CD4-positive, alpha-beta T cell (primary cell): ENCODE measurements at regions of chr21 and their contacts with region 1.

Region 1: DNA sequence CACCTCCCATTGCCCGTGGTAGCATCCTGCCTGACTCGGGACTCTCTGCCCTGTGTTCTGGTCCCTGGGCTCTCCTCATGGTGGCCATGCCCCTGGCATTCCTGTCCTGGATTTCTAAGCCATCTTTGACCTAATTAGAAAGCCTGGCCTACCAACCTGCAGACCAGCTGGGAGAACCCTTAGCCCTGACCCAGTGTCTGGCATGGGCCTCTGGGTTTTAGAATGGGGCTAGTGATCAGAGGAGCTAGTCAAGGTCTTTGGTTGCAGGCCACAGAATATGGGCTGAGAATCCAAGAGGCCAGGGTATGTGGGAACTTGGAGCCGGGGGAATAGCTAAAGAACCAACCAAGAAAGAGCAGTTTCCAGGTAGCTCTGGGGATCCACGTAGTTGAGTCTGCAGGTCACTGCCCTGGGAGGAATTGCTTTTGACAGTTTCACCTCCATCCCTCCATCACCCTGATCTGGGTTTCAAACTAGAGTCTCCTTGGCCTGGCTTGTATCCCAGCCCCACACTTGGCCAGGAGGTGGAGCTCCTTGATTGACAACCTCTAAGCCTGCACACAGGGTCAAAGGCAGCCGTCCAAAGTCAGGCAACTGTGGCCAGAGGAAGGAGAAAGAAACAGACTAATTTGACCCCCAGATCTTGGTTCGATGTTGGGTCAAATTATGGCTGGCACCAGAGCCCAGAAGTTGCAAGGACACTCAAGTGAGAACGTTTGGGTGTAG is 54.7 kb upstream of the ABCG1 start:
- DNase-seq: peak; percentile 22 to 78 (median 50)
- ATAC-seq: peak; percentile 34
- H3K4me3 ChIP-seq: no peak overlapping the region
- H3K4me3 Mint-ChIP-seq: no peak overlapping the region
- H3K27ac ChIP-seq: no peak overlapping the region
- H3K27ac Mint-ChIP-seq: peak overlapping the region; percentile 56
- H3K4me1 ChIP-seq: peaks cover 31% of the 10 kb centered on the region
- H3K4me1 Mint-ChIP-seq: peaks cover 56% of the 10 kb centered on the region
- H3K27me3 ChIP-seq: no peaks in the 10 kb centered on the region
- H3K27me3 Mint-ChIP-seq: no peaks in the 10 kb centered on the region
- CTCF ChIP-seq: peak; percentile 62

Region 2: DNA sequence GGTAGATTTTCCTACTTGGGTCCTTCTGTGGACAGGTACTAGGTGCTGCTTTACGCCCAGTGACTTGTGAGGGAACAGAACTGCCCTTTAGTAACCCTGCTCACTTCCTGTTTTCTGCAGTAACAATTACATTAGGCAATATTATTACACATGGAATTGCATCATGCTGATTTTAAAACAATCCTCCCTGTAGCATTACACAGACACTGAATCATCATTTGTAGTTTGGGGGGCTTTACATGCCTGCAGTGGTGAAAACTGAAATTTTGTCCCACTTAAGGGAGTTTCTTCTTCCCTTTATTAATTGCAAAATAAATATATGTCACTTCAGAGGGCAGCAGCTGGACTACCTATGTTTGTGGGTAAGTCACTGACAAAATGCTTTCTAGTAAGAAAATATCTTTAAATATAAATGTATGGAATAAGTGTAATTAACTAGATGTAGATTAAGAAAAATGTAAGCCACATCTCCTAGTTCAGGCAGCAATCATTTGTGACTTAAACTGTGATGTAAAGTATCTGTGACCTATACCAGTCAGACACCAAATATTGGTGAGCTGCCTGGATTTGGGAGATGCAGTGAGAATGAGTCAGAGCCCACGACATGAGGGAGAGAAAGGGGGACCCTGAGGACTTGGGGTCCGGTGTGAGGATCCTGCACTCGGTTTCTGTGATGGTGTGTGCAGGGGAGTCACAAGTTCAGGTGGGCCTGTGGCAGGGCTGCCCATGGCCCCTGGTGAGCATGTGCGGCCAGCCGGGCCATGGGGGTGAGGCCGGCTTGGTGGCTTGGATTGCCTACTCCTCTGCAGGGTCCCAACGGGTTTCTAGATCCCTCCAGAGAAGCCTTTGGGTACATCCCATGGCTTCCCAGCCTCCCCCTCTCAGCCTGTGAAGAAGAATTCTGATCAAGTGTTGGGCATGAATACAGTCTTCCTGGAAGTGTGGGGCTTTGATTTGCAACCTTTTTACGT is 35.5 kb after region 1 on chr21:
- CTCF ChIA-PET with region 1: interaction called, 7 read pairs
- POLR2A ChIA-PET with region 1: no interaction called
- intact Hi-C with region 1: loop called in 1 of 2 experiments (anchors 5 kb)
- DNase-seq: peak in 5 of 14 experiments; percentile 30 to 77 (median 71)
- ATAC-seq: peak; percentile 84
- H3K4me3 ChIP-seq: no peak overlapping the region
- H3K4me3 Mint-ChIP-seq: peak overlapping the region; percentile 31
- H3K27ac ChIP-seq: peak overlapping the region in 1 of 2 donors; percentile 64
- H3K27ac Mint-ChIP-seq: peak overlapping the region; percentile 94
- H3K4me1 ChIP-seq: peaks cover 33% of the 10 kb centered on the region
- H3K4me1 Mint-ChIP-seq: peaks cover 71% of the 10 kb centered on the region
- H3K27me3 ChIP-seq: no peaks in the 10 kb centered on the region
- H3K27me3 Mint-ChIP-seq: no peaks in the 10 kb centered on the region
- CTCF ChIP-seq: no peak

Region 3: DNA sequence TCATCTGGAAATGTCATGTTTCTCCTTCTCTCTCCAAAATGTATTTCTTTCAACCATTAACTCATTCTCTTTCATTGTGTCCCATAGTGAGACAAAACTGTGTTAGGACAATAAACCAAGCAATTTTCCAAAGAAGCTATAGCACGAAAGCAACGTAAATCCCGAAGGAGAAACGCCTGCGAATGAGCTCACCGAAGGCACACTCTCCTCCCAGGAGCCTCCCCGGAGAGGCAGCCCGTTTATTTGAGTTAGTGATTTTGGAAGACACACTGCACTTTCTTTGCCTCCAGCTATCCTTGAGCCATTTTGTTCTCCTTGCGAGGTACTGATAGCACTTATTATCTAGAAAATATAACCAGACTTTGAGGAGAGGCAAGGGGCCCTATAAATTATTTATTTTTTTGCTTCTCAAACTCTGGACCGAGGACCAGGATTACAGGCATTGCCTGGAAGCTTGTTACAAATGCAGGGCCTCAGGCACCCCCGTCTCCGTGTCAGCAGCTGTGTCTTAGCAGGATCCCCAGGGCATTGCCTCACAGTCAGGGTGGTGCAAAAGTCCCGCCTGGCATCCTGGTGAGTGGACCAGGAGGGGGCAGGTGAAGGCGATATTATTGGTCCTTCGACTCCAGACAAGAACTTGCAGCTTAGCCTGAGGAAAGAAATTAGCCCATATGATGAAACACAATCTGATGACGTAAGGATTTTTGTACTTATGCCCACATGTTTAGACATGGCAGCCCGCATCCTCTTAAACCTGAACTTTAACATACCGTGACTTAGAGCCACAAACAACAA is 290.8 kb after region 1 on chr21:
- CTCF ChIA-PET with region 1: interaction called, 4 read pairs
- POLR2A ChIA-PET with region 1: no interaction called
- intact Hi-C with region 1: loop called in 1 of 2 experiments (anchors 1 kb)
- DNase-seq: no peak
- ATAC-seq: no peak
- H3K4me3 ChIP-seq: no peak overlapping the region
- H3K4me3 Mint-ChIP-seq: no peak overlapping the region
- H3K27ac ChIP-seq: no peak overlapping the region
- H3K27ac Mint-ChIP-seq: peak overlapping the region; percentile 79
- H3K4me1 ChIP-seq: peaks cover 25% of the 10 kb centered on the region
- H3K4me1 Mint-ChIP-seq: peaks cover 32% of the 10 kb centered on the region
- H3K27me3 ChIP-seq: no peaks in the 10 kb centered on the region
- H3K27me3 Mint-ChIP-seq: no peaks in the 10 kb centered on the region
- CTCF ChIP-seq: no peak